A549 (cell line): ENCODE measurements at regions of chr2 and their contacts with region 1.

Region 1: GRCh38 chr2:219543601-219544358 is at the starts of genes CHPF and TMEM198:
- DNase-seq: peak; percentile 87 to 96
- ATAC-seq: peak; percentile 66 to 78
- H3K4me3 ChIP-seq: peak within 1 kb of the TSS; percentile 61
- H3K27ac ChIP-seq: peak within 1 kb of the TSS; percentile 58 to 89
- H3K4me1 ChIP-seq: peaks cover 12% of the 10 kb centered on the region
- CTCF ChIP-seq: no peak
- EP300 ChIP-seq: no peak
- POLR2A ChIP-seq: no peak; the same call in 1 of the 2 replicates
- RAD21 ChIP-seq: no peak
- polyA plus RNA-seq, gene CHPF: 9.0 and 10.2 TPM in 2 replicates
- polyA plus RNA-seq, gene TMEM198: 0.31 and 0.33 TPM in 2 replicates

Region 2: DNA sequence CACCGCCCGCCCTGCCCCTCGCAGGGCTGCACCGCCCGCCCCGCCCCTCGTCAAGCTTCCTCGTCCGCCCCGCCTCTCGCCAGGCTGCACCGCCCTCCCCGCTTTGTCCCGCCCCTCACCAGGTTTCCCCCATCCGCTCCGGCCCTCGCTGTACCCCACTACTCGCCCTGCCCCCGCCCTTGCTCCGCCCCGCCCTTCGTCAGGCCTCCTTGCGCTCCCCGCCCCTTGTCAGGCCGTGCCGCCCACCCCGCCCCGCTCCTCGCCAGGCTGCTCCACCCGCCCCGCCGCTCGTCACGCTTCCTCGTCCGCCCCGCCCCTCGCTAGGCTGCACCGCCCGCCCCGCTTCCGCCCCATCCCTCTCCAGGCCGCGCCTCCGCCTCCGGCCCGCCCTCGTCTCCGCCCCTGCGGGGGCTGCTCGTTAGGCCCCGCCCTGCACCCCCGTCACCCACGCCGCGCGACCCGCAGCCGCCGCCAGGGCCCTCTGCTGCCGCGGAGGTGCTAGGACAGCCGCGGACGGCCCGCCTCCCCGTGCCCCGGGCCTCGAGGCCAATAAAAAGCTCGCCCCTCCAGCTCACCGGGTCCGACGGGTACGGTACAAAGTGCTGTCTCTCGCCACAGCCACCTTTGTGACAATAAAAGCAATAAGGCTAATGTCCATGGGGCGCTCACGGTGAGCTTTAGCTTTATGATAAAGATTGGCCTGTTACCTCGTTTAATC is 155.5 kb before region 1 on chr2:
- CTCF ChIA-PET with region 1: interaction called, 3 read pairs
- POLR2A ChIA-PET with region 1: interaction called, 11 read pairs
- DNase-seq: peak; percentile 76 to 96
- ATAC-seq: peak; percentile 77 to 82
- H3K4me3 ChIP-seq: peak overlapping the region; percentile 99
- H3K27ac ChIP-seq: peak overlapping the region; percentile 75 to 96
- H3K4me1 ChIP-seq: peaks cover 9% of the 10 kb centered on the region
- CTCF ChIP-seq: peak; percentile 39; the same call in 2 of the 3 replicates
- EP300 ChIP-seq: no peak
- POLR2A ChIP-seq: no peak
- RAD21 ChIP-seq: peak in 1 of 2 experiments; percentile 38; a peak in 1 of 5 replicates

Region 3: DNA sequence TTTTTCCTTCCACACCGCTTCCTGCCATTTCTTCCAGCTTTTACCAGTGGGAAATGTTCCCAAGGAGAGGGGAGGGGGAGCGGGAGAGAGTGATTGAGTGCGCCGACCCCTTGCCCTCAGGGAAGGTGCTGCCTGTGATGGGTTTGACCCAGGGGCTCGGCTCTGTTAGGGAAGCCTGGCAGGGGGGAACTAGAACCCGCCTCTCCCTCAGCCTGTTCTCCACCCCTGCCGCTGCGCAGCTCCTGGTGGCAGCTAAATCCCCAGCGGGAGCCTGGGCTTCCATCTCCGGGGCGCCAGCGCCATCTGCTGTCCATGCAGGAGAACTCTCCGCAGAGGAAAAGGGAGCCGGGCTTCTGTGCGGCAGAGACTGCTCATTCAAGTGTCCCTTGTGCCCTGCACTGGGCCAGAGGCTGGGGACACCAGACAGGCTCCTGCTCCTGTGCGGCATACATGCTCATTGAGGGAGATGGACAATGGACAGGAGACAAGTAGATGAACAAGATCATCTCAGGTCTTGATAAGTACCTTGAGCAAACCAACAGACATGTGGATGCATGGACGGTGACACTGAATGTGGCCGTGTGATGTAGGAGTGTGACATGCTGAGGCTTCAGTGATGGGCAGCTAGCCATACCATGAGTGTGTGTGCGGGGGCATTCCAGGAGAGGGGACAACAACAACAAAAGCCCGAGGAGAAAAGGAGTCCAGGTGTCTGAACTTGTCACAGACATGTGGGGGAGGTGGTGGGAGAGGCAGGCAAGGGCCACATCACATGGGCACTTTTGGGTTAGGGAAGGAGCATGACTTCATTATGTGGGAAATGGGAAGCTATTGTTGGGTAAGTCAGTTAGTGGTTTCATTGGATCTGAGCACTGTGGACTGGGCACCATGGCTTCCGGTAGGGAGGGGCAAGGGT is 13.5 kb before region 1 on chr2:
- CTCF ChIA-PET with region 1: interaction called, 164 read pairs
- POLR2A ChIA-PET with region 1: no interaction called
- DNase-seq: peak; percentile 81 to 94
- ATAC-seq: peak; percentile 71 to 93
- H3K4me3 ChIP-seq: peak overlapping the region; percentile 33; the same call in 2 of the 3 replicates
- H3K27ac ChIP-seq: peak overlapping the region in 1 of 2 experiments; percentile 57; a peak in 1 of 6 replicates
- H3K4me1 ChIP-seq: peaks cover 4% of the 10 kb centered on the region; the same call in 1 of the 3 replicates
- CTCF ChIP-seq: peak; percentile 94
- EP300 ChIP-seq: no peak
- POLR2A ChIP-seq: no peak
- RAD21 ChIP-seq: peak; percentile 99

Region 4: GRCh38 chr2:219565130-219566080 is 21.6 kb after region 1 on chr2:
- CTCF ChIA-PET with region 1: interaction called, 77 read pairs
- POLR2A ChIA-PET with region 1: no interaction called
- DNase-seq: no peak
- ATAC-seq: no peak
- H3K4me3 ChIP-seq: no peak overlapping the region
- H3K27ac ChIP-seq: no peak overlapping the region
- H3K4me1 ChIP-seq: peaks cover 5% of the 10 kb centered on the region; the same call in 1 of the 3 replicates
- CTCF ChIP-seq: no peak
- EP300 ChIP-seq: no peak
- POLR2A ChIP-seq: no peak
- RAD21 ChIP-seq: no peak

Region 5: GRCh38 chr2:219633276-219634065 is 89.7 kb after region 1 on chr2:
- CTCF ChIA-PET with region 1: interaction called, 10 read pairs
- POLR2A ChIA-PET with region 1: no interaction called
- DNase-seq: no peak
- ATAC-seq: no peak
- H3K4me3 ChIP-seq: no peak overlapping the region
- H3K27ac ChIP-seq: no peak overlapping the region
- H3K4me1 ChIP-seq: no peaks in the 10 kb centered on the region; the same call in 2 of the 3 replicates
- CTCF ChIP-seq: no peak
- EP300 ChIP-seq: no peak
- POLR2A ChIP-seq: no peak
- RAD21 ChIP-seq: no peak

Region 6: GRCh38 chr2:219689676-219690628 is 146.2 kb after region 1 on chr2:
- CTCF ChIA-PET with region 1: interaction called, 69 read pairs
- POLR2A ChIA-PET with region 1: no interaction called
- DNase-seq: peak; percentile 57 to 58
- ATAC-seq: peak; percentile 61 to 85; a peak in 4 of 6 replicates
- H3K4me3 ChIP-seq: no peak overlapping the region
- H3K27ac ChIP-seq: no peak overlapping the region
- H3K4me1 ChIP-seq: no peaks in the 10 kb centered on the region
- CTCF ChIP-seq: peak; percentile 81
- EP300 ChIP-seq: no peak
- POLR2A ChIP-seq: no peak
- RAD21 ChIP-seq: peak; percentile 70 to 73

Region 7: DNA sequence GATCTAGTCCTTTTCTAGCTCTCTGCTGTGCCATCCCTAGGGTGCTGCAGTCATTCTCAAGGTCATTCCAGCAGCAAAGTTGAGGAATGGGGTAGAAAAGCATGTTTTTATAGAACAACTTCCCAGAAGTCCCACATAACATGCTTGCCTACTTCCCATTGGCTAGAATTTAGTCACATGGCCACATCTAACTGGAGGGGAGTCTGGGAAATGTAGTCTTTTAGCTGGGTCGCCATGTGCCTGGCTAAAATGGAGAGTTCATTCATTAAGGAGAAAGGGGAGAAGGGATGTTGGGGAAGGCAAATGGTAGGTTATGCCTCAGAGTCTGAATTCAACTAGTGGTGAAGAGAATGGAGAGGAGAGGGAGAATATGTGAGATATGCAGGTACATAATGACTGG is 169.3 kb after region 1 on chr2:
- CTCF ChIA-PET with region 1: no interaction called
- POLR2A ChIA-PET with region 1: no interaction called
- DNase-seq: peak; percentile 17 to 64
- ATAC-seq: peak; percentile 43 to 94; a peak in 5 of 6 replicates
- H3K4me3 ChIP-seq: no peak overlapping the region
- H3K27ac ChIP-seq: no peak overlapping the region
- H3K4me1 ChIP-seq: no peaks in the 10 kb centered on the region
- CTCF ChIP-seq: no peak
- EP300 ChIP-seq: no peak
- POLR2A ChIP-seq: no peak
- RAD21 ChIP-seq: no peak